Gastrocnemius medialis (tissue), 4 donors: ENCODE measurements at regions of chr19 and their contacts with region 1.

Region 1: GRCh38 chr19:46924874-46925547 is 64.2 kb downstream of the ARHGAP35 start:
- DNase-seq: no peak
- ATAC-seq: peak in 1 of 2 donors; percentile 69
- H3K4me3 ChIP-seq: peak overlapping the region in 1 of 4 donors; percentile 10
- H3K27ac ChIP-seq: peak overlapping the region; percentile 56 to 85 (median 78)
- H3K4me1 ChIP-seq: peaks cover 63 to 65% of the 10 kb centered on the region in 2 donors
- H3K27me3 ChIP-seq: no peaks in the 10 kb centered on the region
- CTCF ChIP-seq: no peak
- POLR2A ChIP-seq: no peak

Region 2: GRCh38 chr19:46860125-46860845 is 64.7 kb before region 1 on chr19:
- in situ Hi-C with region 1: loop called in 1 of 4 experiments (anchors 5 kb)
- intact Hi-C with region 1: loop called (anchors 2 kb)
- DNase-seq: peak; percentile 99
- ATAC-seq: peak; percentile 79 to 83
- H3K4me3 ChIP-seq: peak overlapping the region; percentile 71 to 98 (median 86)
- H3K27ac ChIP-seq: peak overlapping the region; percentile 94 to 100 (median 100)
- H3K4me1 ChIP-seq: peaks cover 51 to 53% of the 10 kb centered on the region in 2 donors
- H3K27me3 ChIP-seq: no peaks in the 10 kb centered on the region
- CTCF ChIP-seq: no peak
- POLR2A ChIP-seq: peak; percentile 83 to 84

Region 3: GRCh38 chr19:46972311-46972710 is 47.3 kb after region 1 on chr19:
- in situ Hi-C with region 1: no loop called
- intact Hi-C with region 1: no loop called
- DNase-seq: peak; percentile 27 to 69
- ATAC-seq: peak; percentile 11 to 29
- H3K4me3 ChIP-seq: no peak overlapping the region
- H3K27ac ChIP-seq: peak overlapping the region; percentile 78 to 89 (median 84)
- H3K4me1 ChIP-seq: peaks cover 70 to 74% of the 10 kb centered on the region in 2 donors
- H3K27me3 ChIP-seq: no peaks in the 10 kb centered on the region
- CTCF ChIP-seq: no peak
- POLR2A ChIP-seq: peak in 1 of 2 donors; percentile 42

Region 4: GRCh38 chr19:46984077-46985010 is 59.3 kb after region 1 on chr19:
- in situ Hi-C with region 1: loop called in 1 of 4 experiments (anchors 5 kb)
- intact Hi-C with region 1: loop called (anchors 5 kb)
- DNase-seq: peak; percentile 70 to 75
- ATAC-seq: peak; percentile 98 to 99
- H3K4me3 ChIP-seq: peak overlapping the region in 2 of 4 donors; percentile 6 to 38
- H3K27ac ChIP-seq: peak overlapping the region; percentile 79 to 88 (median 87)
- H3K4me1 ChIP-seq: peaks cover 42 to 54% of the 10 kb centered on the region in 2 donors
- H3K27me3 ChIP-seq: no peaks in the 10 kb centered on the region
- CTCF ChIP-seq: no peak
- POLR2A ChIP-seq: peak in 1 of 2 donors; percentile 29